Activated CD4-positive, alpha-beta T cell treated with anti-CD3 and anti-CD28 coated beads, Interleukin-2, amount 10 ng/mL, durations not matched to agents 24 days and 14 days (primary cell): ENCODE measurements at regions of chr1 and their contacts with region 1.

Region 1: GRCh38 chr1:205977402-205978014 is 25.7 kb downstream of the RAB7B start:
- DNase-seq: peak; percentile 92
- H3K4me3 Mint-ChIP-seq: no peak overlapping the region
- H3K27ac Mint-ChIP-seq: no peak overlapping the region
- H3K4me1 Mint-ChIP-seq: peaks cover 2% of the 10 kb centered on the region
- H3K27me3 Mint-ChIP-seq: peaks cover 2% of the 10 kb centered on the region

Region 2: GRCh38 chr1:205791568-205792180 is 185.8 kb before region 1 on chr1:
- intact Hi-C with region 1: loop called (anchors 1 kb)
- DNase-seq: peak; percentile 89
- H3K4me3 Mint-ChIP-seq: no peak overlapping the region
- H3K27ac Mint-ChIP-seq: no peak overlapping the region
- H3K4me1 Mint-ChIP-seq: peaks cover 3% of the 10 kb centered on the region
- H3K27me3 Mint-ChIP-seq: no peaks in the 10 kb centered on the region